ENCODE measurements at regions of chr17 and their contacts with region 1.

Region 1: GRCh38 chr17:33779225-33779591 is 475.9 kb upstream of the CCL2 start:
- DNase-seq: peak; percentile 24
- H3K4me3 ChIP-seq: no peak overlapping the region
- CTCF ChIP-seq: peak; percentile 75

Region 2: DNA sequence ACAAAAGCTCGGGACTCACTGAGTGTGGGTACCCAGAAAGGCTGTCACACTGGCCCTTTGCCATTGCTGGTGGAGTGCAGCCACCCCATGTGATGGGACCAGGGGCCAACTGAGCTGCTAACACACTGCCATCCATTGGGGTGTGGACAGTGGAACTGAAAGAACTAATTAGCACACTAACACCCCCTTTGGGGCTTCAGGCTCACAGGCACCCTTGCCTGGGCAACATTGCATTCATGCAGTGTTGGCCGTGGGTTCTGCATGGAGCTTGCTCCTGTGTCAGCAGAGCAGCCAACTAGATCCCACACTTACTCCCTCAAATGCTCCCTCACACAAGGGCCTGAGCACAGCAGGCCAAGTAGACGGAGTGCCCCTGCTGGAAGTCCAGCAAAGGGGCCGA is 10.1 kb before region 1 on chr17:
- CTCF ChIA-PET with region 1: interaction called, 14 read pairs
- POLR2A ChIA-PET with region 1: no interaction called
- DNase-seq: no peak
- H3K4me3 ChIP-seq: no peak overlapping the region
- CTCF ChIP-seq: no peak

Measured in AG04449 (cell line).